PC-3 (cell line): ENCODE measurements at regions of chr20 and their contacts with region 1.

Region 1: DNA sequence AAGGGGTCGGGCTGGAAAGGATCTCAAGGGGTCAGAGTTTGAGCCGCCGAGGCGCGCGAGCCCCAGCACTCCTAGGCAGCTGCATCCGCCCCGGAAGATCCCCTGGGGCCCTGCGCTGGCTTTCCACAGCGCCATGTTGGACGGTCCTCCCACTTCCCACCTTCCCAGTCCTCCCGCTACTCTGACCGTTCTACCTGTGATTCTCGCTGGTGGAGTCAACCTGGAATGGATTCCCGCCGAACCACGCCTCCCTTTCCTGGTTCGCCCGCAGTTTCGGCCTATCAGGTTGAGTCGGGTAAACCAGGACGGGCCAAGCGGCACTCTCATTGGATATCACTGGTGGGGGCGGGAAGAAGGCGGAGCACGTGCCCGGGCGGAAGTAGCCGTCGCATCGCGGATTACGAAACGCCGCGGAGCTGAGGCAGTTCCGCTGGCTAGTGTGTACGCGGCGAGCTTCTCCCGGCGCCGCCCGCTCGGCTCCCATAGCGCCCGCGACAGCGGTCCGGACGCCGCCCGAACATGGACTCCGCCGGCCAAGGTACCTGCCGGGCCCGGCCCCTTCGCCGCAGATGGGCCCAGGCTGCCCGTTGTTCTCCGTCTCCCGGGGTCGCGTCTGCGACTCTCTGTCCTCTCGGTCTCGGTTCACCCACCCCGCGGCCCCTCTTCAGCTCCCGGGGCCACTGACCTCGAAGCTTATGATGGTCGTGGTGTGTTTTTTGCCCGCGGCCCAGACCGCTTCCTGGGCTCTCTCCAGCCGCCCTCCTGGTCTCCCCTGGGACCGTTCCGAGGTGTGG is at the start of gene TPD52L2:
- DNase-seq: peak; percentile 99
- ATAC-seq: peak; percentile 86
- H3K4me3 ChIP-seq: peak within 1 kb of the TSS; percentile 90
- H3K27ac ChIP-seq: peak within 1 kb of the TSS; percentile 77
- H3K4me1 ChIP-seq: peaks cover 10% of the 10 kb centered on the region
- H3K27me3 ChIP-seq: no peaks in the 10 kb centered on the region
- CTCF ChIP-seq: no peak
- total RNA-seq, gene TPD52L2: 147 and 167 TPM in 2 replicates

Region 2: GRCh38 chr20:63819224-63819921 is 45.7 kb before region 1 on chr20:
- CTCF ChIA-PET with region 1: no interaction called
- POLR2A ChIA-PET with region 1: no interaction called
- intact Hi-C with region 1: loop called (anchors 1 kb)
- DNase-seq: peak; percentile 54
- ATAC-seq: peak; percentile 93
- H3K4me3 ChIP-seq: peak overlapping the region; percentile 58
- H3K27ac ChIP-seq: no peak overlapping the region
- H3K4me1 ChIP-seq: peaks cover 5% of the 10 kb centered on the region; the same call in 1 of the 2 replicates
- H3K27me3 ChIP-seq: no peaks in the 10 kb centered on the region
- CTCF ChIP-seq: peak; percentile 66

Region 3: DNA sequence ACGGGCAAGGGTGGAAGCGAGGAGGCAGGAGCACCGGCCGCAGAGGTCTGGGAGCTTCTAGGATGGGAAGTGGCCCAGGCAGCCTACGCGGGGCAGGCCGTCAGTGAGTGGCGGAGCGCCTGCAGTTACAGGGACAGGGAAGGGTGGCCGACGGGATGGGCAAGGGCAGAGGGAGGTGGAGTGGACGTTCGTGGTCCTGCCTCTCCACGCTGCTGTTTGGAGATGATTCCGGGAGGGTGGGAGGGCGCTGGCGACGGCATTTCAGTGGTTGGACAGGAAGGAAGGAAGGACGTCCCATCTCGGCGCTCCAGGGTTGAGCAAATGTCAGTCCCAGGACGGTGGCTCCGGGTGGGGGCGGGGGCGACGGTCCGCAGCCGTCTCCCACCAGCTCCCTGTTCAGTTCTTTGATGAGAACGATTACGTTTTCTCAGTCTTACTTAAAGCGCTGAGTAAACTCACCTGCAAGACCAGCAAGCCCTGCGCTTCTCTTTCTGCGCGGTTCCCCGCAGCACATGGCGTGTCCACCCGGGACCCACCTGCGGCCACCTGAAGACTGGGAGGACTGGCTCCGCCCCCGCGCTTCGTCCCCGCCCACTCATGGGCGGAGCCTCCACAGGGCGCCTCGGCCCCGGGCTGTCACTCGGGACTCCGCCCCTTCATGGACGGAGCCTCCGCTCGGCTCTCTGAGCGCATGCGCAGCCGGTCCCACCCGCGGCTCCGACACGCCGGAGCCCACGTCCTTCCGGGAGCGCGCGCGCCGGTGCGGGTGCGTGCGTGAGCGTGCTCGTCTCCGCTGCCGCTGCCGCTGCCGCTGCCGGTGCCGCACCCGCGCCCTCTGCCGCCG is 29.5 kb after region 1 on chr20 and contains the start of gene DNAJC5:
- CTCF ChIA-PET with region 1: no interaction called
- POLR2A ChIA-PET with region 1: interaction called, 3 read pairs
- intact Hi-C with region 1: loop called (anchors 2 kb)
- DNase-seq: peak; percentile 98
- ATAC-seq: peak; percentile 89
- H3K4me3 ChIP-seq: peak within 1 kb of the TSS; percentile 75
- H3K27ac ChIP-seq: peak within 1 kb of the TSS; percentile 48
- H3K4me1 ChIP-seq: peaks cover 26% of the 10 kb centered on the region
- H3K27me3 ChIP-seq: no peaks in the 10 kb centered on the region
- CTCF ChIP-seq: no peak
- total RNA-seq, gene DNAJC5: 73.7 and 80.1 TPM in 2 replicates

Region 4: DNA sequence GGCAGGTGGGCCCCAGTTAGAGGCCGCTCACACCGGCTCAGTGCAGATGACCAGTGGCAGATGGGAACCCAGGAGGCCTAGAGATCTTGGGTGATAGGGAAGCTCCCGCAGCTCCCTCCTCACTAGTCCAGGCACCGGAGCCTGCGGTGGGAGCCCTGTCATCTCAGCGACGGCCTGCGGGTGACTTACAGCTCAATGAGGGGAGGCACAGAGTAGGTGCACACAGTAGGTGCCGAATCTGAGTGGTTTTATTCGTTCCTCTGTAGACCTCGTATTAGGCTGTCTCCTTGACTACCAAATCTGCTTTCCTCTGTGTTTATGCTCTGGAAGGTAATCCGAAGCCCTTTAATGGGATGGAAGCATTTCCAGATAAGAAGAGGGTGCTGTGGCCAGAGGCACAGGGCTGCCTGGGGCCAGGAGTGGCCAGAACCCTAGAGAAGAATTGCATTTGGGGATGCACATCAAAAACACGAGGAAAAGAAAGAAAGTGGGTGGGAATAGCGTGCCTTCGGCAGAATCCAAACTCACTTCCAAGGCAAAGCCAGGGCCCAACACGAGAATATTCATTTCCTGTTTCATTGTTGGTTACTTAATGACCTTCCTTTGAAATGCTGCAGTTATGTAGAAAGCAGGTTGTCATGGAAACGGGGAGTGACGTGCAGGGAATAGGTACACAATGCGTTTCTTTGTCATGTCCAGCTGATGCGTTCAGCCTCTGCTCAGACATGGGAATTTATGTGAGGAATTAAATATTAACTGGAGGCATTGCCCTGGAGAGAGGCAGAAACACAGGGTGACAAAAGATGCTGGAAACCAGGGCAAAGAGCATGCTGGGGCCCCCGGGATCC is 323.9 kb after region 1 on chr20:
- CTCF ChIA-PET with region 1: no interaction called
- POLR2A ChIA-PET with region 1: no interaction called
- intact Hi-C with region 1: no loop called
- DNase-seq: peak; percentile 31
- ATAC-seq: no peak
- H3K4me3 ChIP-seq: no peak overlapping the region
- H3K27ac ChIP-seq: no peak overlapping the region
- H3K4me1 ChIP-seq: no peaks in the 10 kb centered on the region
- H3K27me3 ChIP-seq: peaks cover 44% of the 10 kb centered on the region
- CTCF ChIP-seq: no peak